K562 (cell line): ENCODE measurements at regions of chrX and their contacts with region 1.

Region 1: DNA sequence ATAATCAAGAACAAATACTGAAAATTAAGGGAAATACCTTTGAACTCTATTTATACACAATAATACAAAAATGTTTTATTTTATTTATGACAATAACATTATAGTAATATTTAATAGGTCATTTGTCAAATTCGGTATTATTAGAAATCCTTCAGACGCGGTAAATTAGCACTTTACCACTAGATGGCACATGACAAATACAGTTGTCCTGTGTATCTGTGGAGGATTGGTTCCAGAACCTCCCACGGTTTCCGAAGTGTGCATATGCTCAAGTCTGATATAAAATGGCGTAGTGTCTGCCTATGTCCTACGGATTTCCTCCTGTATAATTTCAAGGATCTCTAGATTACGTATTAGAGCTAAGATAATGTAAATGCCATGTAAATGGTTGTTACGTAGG is 8.1 kb upstream of the LINC00632 start:
- DNase-seq: peak in 1 of 4 experiments; percentile 10
- ATAC-seq: no peak
- H3K4me3 ChIP-seq: no peak overlapping the region
- H3K27ac ChIP-seq: no peak overlapping the region
- H3K4me1 ChIP-seq: no peaks in the 10 kb centered on the region
- H3K27me3 ChIP-seq: no peaks in the 10 kb centered on the region
- CTCF ChIP-seq: 0 out of 6 replicates have a peak, but pooled peaks of 1 of the 3 experiments have one; percentile 16
- EP300 ChIP-seq: no peak
- POLR2A ChIP-seq: no peak
- RAD21 ChIP-seq: 0 out of 4 replicates have a peak, but pooled peaks have one; percentile 5 to 20

Region 2: DNA sequence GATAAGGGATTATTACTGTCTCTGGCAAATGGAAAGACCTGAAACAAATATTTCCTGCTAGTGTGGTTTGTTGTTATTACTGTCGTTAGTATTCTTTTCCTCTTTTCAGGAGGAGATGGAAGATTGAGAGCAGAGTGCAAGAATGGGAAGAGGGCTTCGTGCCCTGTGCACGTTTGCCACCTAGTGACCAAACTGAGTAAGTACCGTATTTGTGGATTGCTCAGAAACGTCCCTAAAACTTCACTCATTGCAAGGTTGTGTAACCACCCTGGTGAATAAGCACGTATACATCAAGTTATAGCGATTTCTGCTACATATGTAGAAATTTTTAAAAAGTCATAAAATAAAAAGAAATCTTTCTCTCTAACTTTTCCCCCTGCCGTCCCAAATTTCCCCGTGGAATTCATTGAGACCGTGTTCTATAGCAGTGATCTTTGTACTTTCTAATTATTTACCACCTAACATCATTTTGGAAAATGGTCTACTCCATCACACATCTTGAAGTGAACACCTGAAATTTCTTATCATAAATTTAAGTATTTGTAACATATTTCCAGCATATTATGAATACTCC is 32.4 kb after region 1 on chrX:
- CTCF ChIA-PET with region 1: no interaction called
- POLR2A ChIA-PET with region 1: no interaction called
- in situ Hi-C with region 1: no loop called
- intact Hi-C with region 1: loop called (anchors 1 kb)
- DNase-seq: peak; percentile 22 to 52 (median 36)
- ATAC-seq: peak; percentile 89
- H3K4me3 ChIP-seq: no peak overlapping the region
- H3K27ac ChIP-seq: no peak overlapping the region
- H3K4me1 ChIP-seq: no peaks in the 10 kb centered on the region
- H3K27me3 ChIP-seq: no peaks in the 10 kb centered on the region
- CTCF ChIP-seq: peak; percentile 43 to 68 (median 57); a peak in 4 of 6 replicates
- EP300 ChIP-seq: no peak
- POLR2A ChIP-seq: no peak
- RAD21 ChIP-seq: peak; percentile 58 to 69

Region 3: GRCh38 chrX:140799216-140799615 is 97.7 kb after region 1 on chrX:
- CTCF ChIA-PET with region 1: no interaction called
- POLR2A ChIA-PET with region 1: no interaction called
- in situ Hi-C with region 1: no loop called
- intact Hi-C with region 1: no loop called
- DNase-seq: no peak
- ATAC-seq: no peak
- H3K4me3 ChIP-seq: no peak overlapping the region
- H3K27ac ChIP-seq: no peak overlapping the region
- H3K4me1 ChIP-seq: no peaks in the 10 kb centered on the region
- H3K27me3 ChIP-seq: no peaks in the 10 kb centered on the region
- CTCF ChIP-seq: no peak
- EP300 ChIP-seq: no peak
- POLR2A ChIP-seq: no peak
- RAD21 ChIP-seq: no peak